ENCODE measurements at regions of chr5 and their contacts with region 1.

Region 1: GRCh38 chr5:136062366-136063274 is 33.8 kb downstream of the TGFBI start:
- DNase-seq: no peak
- H3K4me3 ChIP-seq: no peak overlapping the region
- H3K27ac ChIP-seq: no peak overlapping the region
- H3K4me1 ChIP-seq: peaks cover 0 to 3% (median under 1%) of the 10 kb centered on the region in 4 experiments; a peak in 3 of 7 replicates
- H3K27me3 ChIP-seq: no peaks in the 10 kb centered on the region
- CTCF ChIP-seq: peak in 2 of 3 experiments; percentile 63 to 76; a peak in 3 of 4 replicates
- EP300 ChIP-seq: no peak
- POLR2A ChIP-seq: no peak
- RAD21 ChIP-seq: peak; percentile 85 to 91

Region 2: DNA sequence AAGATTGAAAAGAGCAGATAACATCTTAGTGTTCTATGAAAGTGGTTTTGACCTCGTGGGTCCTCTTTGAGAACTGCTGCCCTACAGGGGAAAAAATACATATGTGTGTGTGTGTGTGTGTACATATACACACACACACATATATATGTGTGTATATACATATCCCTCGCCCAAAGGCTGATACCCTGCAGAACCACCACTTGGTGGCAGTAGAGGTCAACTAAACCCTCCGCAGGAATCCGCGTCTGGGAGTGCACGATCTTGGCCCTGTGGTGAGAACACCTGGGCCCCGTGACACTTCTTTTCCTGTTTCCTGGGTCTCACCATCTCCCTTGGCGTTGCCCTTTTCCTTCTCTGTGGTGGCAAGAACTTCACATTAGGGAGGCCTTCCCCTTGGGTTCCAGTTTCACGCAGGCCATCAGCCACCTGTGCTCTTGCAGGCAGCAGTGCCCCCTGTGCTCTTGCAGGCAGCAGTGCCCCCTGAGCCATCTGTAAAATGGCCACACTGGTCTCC is 175.2 kb before region 1 on chr5:
- CTCF ChIA-PET with region 1: interaction called, 21 read pairs
- POLR2A ChIA-PET with region 1: no interaction called
- DNase-seq: peak; percentile 31 to 80
- H3K4me3 ChIP-seq: peak overlapping the region in 1 of 4 experiments; percentile 41; a peak in 2 of 8 replicates
- H3K27ac ChIP-seq: no peak overlapping the region
- H3K4me1 ChIP-seq: peaks cover 0 to 5% (median 3%) of the 10 kb centered on the region in 4 experiments; a peak in 2 of 7 replicates
- H3K27me3 ChIP-seq: peaks cover 0 to 6% (median 4%) of the 10 kb centered on the region in 4 experiments; a peak in 2 of 7 replicates
- CTCF ChIP-seq: peak; percentile 65 to 83 (median 73)
- EP300 ChIP-seq: no peak
- POLR2A ChIP-seq: no peak
- RAD21 ChIP-seq: peak; percentile 84 to 85

Region 3: DNA sequence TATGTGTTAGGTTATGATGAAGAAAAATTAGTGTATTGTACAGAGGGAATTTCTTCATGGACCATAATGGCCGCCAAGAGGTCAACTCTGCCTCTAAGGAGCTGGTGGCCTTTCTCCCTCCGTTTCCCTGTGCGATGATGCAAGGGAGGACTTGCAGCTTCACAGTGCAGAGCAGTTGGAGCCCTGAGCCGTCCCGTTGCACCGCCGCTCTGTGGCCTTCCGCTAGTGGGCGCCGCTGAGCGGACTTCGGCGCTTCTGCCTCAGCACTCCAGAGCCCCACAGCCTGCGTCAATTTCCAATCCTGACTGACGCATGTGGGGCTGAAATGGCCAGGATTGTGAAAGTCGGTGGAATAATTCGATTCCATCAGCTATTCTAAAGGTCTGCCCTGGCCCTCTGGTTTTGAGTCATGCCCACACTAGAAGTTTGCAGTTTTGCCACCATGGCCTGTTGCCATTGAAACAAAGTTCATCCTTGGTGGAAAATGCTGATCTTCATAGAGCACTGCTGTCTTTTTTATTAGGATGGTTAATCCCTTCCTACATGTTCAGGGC is 85.2 kb before region 1 on chr5:
- CTCF ChIA-PET with region 1: interaction called, 20 read pairs
- POLR2A ChIA-PET with region 1: no interaction called
- DNase-seq: peak; percentile 77 to 96
- H3K4me3 ChIP-seq: no peak overlapping the region
- H3K27ac ChIP-seq: no peak overlapping the region
- H3K4me1 ChIP-seq: peaks cover 0 to 6% (median 0%) of the 10 kb centered on the region in 4 experiments; a peak in 2 of 7 replicates
- H3K27me3 ChIP-seq: peaks cover 0 to 3% (median 0%) of the 10 kb centered on the region in 4 experiments; a peak in 2 of 7 replicates
- CTCF ChIP-seq: peak; percentile 93 to 99 (median 94)
- EP300 ChIP-seq: no peak
- POLR2A ChIP-seq: no peak
- RAD21 ChIP-seq: peak; percentile 69 to 82

Region 4: GRCh38 chr5:135999406-136000139 is 63.0 kb before region 1 on chr5:
- CTCF ChIA-PET with region 1: interaction called, 13 read pairs
- POLR2A ChIA-PET with region 1: no interaction called
- DNase-seq: no peak
- H3K4me3 ChIP-seq: no peak overlapping the region
- H3K27ac ChIP-seq: no peak overlapping the region
- H3K4me1 ChIP-seq: 0 out of 7 replicates have a peak, but pooled peaks cover 0 to 4% (median 0%) of the 10 kb centered on the region in 4 experiments
- H3K27me3 ChIP-seq: no peaks in the 10 kb centered on the region; a peak in 1 of 7 replicates
- CTCF ChIP-seq: no peak
- EP300 ChIP-seq: no peak
- POLR2A ChIP-seq: no peak
- RAD21 ChIP-seq: no peak

Region 5: GRCh38 chr5:136037001-136037705 is 25.5 kb before region 1 on chr5:
- CTCF ChIA-PET with region 1: interaction called, 27 read pairs
- POLR2A ChIA-PET with region 1: interaction called, 3 read pairs
- DNase-seq: no peak
- H3K4me3 ChIP-seq: no peak overlapping the region
- H3K27ac ChIP-seq: no peak overlapping the region
- H3K4me1 ChIP-seq: peaks cover 0 to 4% (median under 1%) of the 10 kb centered on the region in 4 experiments; a peak in 2 of 7 replicates
- H3K27me3 ChIP-seq: peaks cover 0 to 4% (median under 1%) of the 10 kb centered on the region in 4 experiments; a peak in 3 of 7 replicates
- CTCF ChIP-seq: no peak
- EP300 ChIP-seq: no peak
- POLR2A ChIP-seq: no peak
- RAD21 ChIP-seq: no peak

Region 6: DNA sequence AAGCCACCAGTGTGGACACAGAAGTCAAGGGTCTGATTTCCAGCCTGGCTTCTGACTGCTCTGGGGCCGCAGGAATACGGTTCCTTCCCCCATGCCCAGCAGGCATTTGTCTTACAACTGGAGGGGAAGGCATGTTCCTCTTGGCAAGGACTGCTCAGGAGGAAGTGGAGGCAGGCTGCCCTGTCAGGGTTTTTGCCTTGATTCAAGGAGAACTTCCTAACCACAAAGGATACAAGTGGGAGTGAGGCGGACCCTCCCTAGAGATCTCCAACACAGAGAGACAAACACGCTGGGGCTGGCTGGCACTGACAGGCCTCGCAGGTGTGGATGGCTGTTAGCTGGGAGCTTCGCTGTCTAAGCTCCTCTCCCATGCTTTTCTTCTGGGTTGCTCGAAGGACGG is 14.8 kb before region 1 on chr5:
- CTCF ChIA-PET with region 1: interaction called, 30 read pairs
- POLR2A ChIA-PET with region 1: no interaction called
- DNase-seq: no peak
- H3K4me3 ChIP-seq: no peak overlapping the region
- H3K27ac ChIP-seq: no peak overlapping the region
- H3K4me1 ChIP-seq: no peaks in the 10 kb centered on the region
- H3K27me3 ChIP-seq: no peaks in the 10 kb centered on the region
- CTCF ChIP-seq: no peak
- EP300 ChIP-seq: no peak
- POLR2A ChIP-seq: no peak
- RAD21 ChIP-seq: no peak

Region 7: GRCh38 chr5:136080483-136081216 is 18.0 kb after region 1 on chr5:
- CTCF ChIA-PET with region 1: interaction called, 98 read pairs
- POLR2A ChIA-PET with region 1: interaction called, 3 read pairs
- DNase-seq: peak; percentile 47 to 72
- H3K4me3 ChIP-seq: peak overlapping the region; percentile 57 to 67 (median 62)
- H3K27ac ChIP-seq: no peak overlapping the region
- H3K4me1 ChIP-seq: no peaks in the 10 kb centered on the region
- H3K27me3 ChIP-seq: peaks cover 0 to 4% (median 0%) of the 10 kb centered on the region in 4 experiments; a peak in 3 of 7 replicates
- CTCF ChIP-seq: no peak
- EP300 ChIP-seq: no peak
- POLR2A ChIP-seq: peak; percentile 61 to 66; a peak in 2 of 3 replicates
- RAD21 ChIP-seq: no peak

Region 8: GRCh38 chr5:136249678-136250266 is 187.2 kb after region 1 on chr5:
- CTCF ChIA-PET with region 1: no interaction called
- POLR2A ChIA-PET with region 1: no interaction called
- DNase-seq: peak; percentile 33 to 61
- H3K4me3 ChIP-seq: no peak overlapping the region
- H3K27ac ChIP-seq: no peak overlapping the region
- H3K4me1 ChIP-seq: no peaks in the 10 kb centered on the region
- H3K27me3 ChIP-seq: no peaks in the 10 kb centered on the region; a peak in 2 of 7 replicates
- CTCF ChIP-seq: peak; percentile 86 to 95 (median 92)
- EP300 ChIP-seq: no peak
- POLR2A ChIP-seq: no peak
- RAD21 ChIP-seq: peak; percentile 97 to 98